SK-N-SH (cell line): ENCODE measurements at regions of chr1 and their contacts with region 1.

Region 1: GRCh38 chr1:180881806-180882509 is 30.7 kb upstream of the KIAA1614 start:
- DNase-seq: peak; percentile 65
- H3K4me3 ChIP-seq: no peak overlapping the region; a peak in 1 of 4 replicates
- H3K27ac ChIP-seq: no peak overlapping the region
- H3K4me1 ChIP-seq: no peaks in the 10 kb centered on the region
- H3K27me3 ChIP-seq: no peaks in the 10 kb centered on the region
- CTCF ChIP-seq: peak; percentile 69
- EP300 ChIP-seq: no peak
- RAD21 ChIP-seq: peak; percentile 89

Region 2: DNA sequence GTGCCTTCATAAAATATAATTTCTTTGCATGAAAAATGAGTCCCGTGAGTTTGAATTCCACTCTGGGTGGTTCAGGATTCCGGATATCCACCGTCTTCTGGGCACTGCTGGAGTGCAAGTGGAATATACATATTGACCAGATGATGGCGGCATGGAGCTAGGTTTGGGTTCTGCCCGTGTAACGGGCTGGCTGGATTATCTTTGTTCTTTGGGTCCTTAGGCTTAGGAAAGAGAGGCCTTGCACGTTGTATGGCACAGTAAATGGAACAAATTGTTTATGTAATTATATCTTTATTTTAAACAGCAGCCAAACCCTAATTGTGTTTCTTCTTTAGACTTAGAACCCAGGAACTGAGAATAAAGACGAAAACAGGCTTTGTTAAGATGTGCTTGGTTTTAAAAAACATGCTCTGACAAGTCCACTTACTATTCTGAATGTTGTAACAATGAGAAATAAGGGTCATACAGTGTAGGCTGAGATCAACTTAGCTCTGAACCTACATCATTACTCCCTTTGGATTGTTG is 366.0 kb before region 1 on chr1:
- CTCF ChIA-PET with region 1: interaction called, 15 read pairs
- POLR2A ChIA-PET with region 1: no interaction called
- DNase-seq: peak; percentile 83
- H3K4me3 ChIP-seq: no peak overlapping the region; a peak in 1 of 4 replicates
- H3K27ac ChIP-seq: peak overlapping the region; percentile 43 to 87
- H3K4me1 ChIP-seq: peaks cover 0 to 11% of the 10 kb centered on the region in 2 experiments; a peak in 2 of 4 replicates
- H3K27me3 ChIP-seq: no peaks in the 10 kb centered on the region
- CTCF ChIP-seq: peak; percentile 86
- EP300 ChIP-seq: no peak
- RAD21 ChIP-seq: peak; percentile 96

Region 3: DNA sequence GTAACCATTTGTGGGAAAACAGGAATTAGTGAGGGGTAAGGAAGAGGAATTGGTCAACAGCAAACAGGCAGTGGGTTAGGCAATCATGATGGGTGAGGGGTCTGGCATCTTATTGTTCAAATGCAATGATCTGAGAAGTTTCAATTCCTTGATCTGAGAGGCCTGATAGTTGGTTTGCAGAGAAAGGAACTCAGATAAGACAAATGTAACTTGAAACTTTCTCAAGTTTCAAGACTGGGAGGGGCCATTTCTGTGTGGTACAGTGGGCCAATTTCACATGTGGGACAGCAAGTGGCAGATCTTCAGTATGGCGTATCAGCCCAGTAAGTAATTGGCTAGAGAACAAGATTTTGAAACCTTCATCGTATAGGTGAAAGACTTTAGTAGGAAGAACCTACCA is 147.6 kb before region 1 on chr1:
- CTCF ChIA-PET with region 1: no interaction called
- POLR2A ChIA-PET with region 1: no interaction called
- DNase-seq: no peak
- H3K4me3 ChIP-seq: no peak overlapping the region
- H3K27ac ChIP-seq: no peak overlapping the region
- H3K4me1 ChIP-seq: no peaks in the 10 kb centered on the region
- H3K27me3 ChIP-seq: no peaks in the 10 kb centered on the region
- CTCF ChIP-seq: no peak
- EP300 ChIP-seq: no peak
- RAD21 ChIP-seq: no peak

Region 4: GRCh38 chr1:181021811-181022434 is 140.0 kb after region 1 on chr1:
- CTCF ChIA-PET with region 1: interaction called, 19 read pairs
- POLR2A ChIA-PET with region 1: interaction called, 3 read pairs
- DNase-seq: peak; percentile 70
- H3K4me3 ChIP-seq: peak overlapping the region; percentile 92 to 98
- H3K27ac ChIP-seq: peak overlapping the region; percentile 55 to 72
- H3K4me1 ChIP-seq: peaks cover 9 to 10% of the 10 kb centered on the region in 2 experiments; a peak in 3 of 4 replicates
- H3K27me3 ChIP-seq: no peaks in the 10 kb centered on the region
- CTCF ChIP-seq: no peak
- EP300 ChIP-seq: no peak
- RAD21 ChIP-seq: no peak; the same call in 1 of the 2 replicates

Region 5: DNA sequence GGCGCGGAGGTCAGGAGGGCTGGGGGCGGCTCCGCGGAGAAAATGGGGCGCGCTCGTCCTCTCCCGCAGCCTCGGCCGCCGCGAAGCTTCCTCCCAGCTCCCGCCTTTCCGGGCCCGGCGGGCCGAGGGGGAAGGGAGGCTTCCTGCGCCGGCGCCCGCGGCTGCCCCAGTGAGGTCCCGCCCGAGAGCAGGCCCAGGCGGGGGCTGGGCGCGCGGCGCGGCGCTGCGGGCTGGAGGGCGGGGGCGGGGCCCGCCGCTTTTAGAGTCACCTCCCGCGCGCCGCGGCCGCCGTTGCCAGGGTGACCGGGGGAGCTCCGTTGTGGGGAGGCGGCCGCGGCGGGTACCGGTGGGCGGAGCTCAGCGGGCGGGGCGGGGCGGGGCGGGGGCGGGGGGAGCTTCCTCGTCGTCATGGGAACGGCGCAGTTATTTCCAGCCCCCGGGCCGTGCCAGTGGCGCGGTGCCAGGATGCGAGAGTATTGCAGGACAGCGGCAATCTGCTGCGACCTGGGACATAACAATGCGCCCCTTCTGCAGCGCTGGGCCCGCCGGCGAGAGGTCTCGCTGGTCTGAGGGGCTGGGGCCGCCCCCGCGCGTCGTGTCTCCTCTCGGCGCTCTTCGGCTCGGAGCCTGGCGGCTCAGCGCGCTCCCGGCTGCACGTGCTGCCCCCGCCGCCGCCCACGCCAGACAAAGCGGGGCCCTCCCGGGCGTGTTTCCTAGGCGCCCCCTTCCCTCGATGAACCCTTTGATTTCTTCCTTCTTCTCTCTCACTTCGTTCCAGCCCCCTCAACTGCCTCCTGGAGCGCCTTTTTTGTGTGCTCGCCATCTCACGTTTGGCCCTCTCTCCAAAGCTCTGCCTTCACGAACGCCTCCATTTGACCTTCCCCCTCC is 223.4 kb after region 1 on chr1:
- CTCF ChIA-PET with region 1: interaction called, 10 read pairs
- POLR2A ChIA-PET with region 1: interaction called, 3 read pairs
- DNase-seq: peak; percentile 98
- H3K4me3 ChIP-seq: peak overlapping the region; percentile 80 to 94
- H3K27ac ChIP-seq: peak overlapping the region; percentile 98 to 99
- H3K4me1 ChIP-seq: peaks cover 45 to 52% of the 10 kb centered on the region in 2 experiments; a peak in 3 of 4 replicates
- H3K27me3 ChIP-seq: no peaks in the 10 kb centered on the region
- CTCF ChIP-seq: no peak
- EP300 ChIP-seq: 0 out of 4 replicates have a peak, but pooled peaks of 1 of the 2 experiments have one; percentile 6
- RAD21 ChIP-seq: no peak

Region 6: GRCh38 chr1:181166377-181167196 is 284.6 kb after region 1 on chr1:
- CTCF ChIA-PET with region 1: interaction called, 18 read pairs
- POLR2A ChIA-PET with region 1: no interaction called
- DNase-seq: peak; percentile 78
- H3K4me3 ChIP-seq: no peak overlapping the region; a peak in 1 of 4 replicates
- H3K27ac ChIP-seq: no peak overlapping the region
- H3K4me1 ChIP-seq: peaks cover 0 to 2% of the 10 kb centered on the region in 2 experiments; a peak in 1 of 4 replicates
- H3K27me3 ChIP-seq: no peaks in the 10 kb centered on the region; the same call in 1 of the 2 replicates
- CTCF ChIP-seq: peak; percentile 85
- EP300 ChIP-seq: no peak
- RAD21 ChIP-seq: peak; percentile 98